ENCODE measurements at regions of chr6 and their contacts with region 1.

Region 1: DNA sequence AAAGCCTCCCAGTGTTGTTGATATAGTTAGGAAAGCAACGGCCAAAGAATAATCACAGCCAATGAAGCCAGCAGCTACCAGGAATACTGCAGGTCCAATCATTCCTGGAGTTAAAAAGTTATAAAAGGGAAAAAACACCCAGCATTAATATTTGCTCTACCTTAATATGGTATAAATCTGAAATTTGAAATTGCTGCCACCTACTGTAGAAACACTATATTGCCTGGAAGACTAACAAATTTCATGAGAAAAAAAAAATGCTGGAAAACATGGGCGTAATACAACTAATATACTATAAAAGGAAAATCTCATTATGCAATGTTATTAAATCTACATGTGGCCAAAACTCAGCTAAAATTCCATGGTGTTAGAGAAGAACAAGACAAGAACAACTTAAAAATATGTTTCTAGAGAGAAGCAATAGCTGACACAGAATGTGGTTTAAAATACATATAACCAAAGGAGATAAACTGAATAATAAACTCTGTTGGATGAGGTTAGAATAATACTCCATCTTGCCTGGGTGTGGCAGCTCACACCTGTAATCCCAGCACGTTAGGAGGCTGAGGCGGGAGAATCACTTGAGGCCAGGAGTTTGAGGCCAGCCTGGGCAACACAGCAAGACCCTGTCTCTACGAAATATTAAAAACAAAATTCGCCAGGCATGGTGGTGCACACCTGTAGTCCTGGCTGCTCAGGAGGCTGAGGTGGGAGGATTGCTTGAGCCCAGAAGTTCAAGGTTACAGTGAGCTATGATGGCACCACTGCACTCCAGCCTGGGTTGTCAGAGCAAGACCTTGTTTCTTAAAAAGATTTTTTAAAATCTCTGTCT is 43.1 kb downstream of the SLC17A5 start:
- DNase-seq: no peak
- ATAC-seq: peak in 2 of 4 donors; percentile 53 to 56
- H3K4me3 ChIP-seq: no peak overlapping the region
- H3K27ac ChIP-seq: no peak overlapping the region
- H3K4me1 ChIP-seq: peaks cover 0 to 5% (median 0%) of the 10 kb centered on the region in 12 donors
- H3K27me3 ChIP-seq: no peaks in the 10 kb centered on the region
- CTCF ChIP-seq: peak; percentile 52 to 83 (median 72)
- POLR2A ChIP-seq: no peak

Region 2: DNA sequence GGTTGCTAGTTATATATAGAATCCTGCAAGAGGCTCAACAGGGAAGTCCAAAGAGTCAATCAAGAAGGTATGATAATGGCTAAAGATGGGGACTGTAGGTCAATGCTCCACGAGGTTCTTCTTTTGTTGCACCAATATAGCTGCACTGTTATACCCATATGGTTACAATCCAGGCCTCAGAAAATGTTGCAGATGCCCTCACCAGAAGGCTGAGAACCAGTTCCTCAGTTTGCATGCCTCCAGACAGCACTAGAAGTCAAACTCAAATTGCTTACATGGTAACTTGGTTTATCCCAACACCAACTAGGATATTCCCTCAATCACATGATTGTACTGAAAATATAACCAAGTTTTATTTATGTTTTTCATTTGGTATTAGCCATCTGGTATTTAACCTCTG is 101.9 kb before region 1 on chr6:
- intact Hi-C with region 1: loop called in 2 of 10 experiments (anchors 2 to 5 kb)
- DNase-seq: no peak
- ATAC-seq: no peak
- H3K4me3 ChIP-seq: no peak overlapping the region
- H3K27ac ChIP-seq: peak overlapping the region in 1 of 12 donors; percentile 23
- H3K4me1 ChIP-seq: peaks cover 0 to 5% (median 0%) of the 10 kb centered on the region in 12 donors
- H3K27me3 ChIP-seq: no peaks in the 10 kb centered on the region
- CTCF ChIP-seq: no peak
- POLR2A ChIP-seq: no peak

Region 3: GRCh38 chr6:73515204-73515655 is 95.4 kb before region 1 on chr6:
- intact Hi-C with region 1: loop called (anchors 1 to 5 kb)
- DNase-seq: no peak
- ATAC-seq: no peak
- H3K4me3 ChIP-seq: no peak overlapping the region
- H3K27ac ChIP-seq: peak overlapping the region in 1 of 12 donors; percentile 25
- H3K4me1 ChIP-seq: peaks cover 0 to 48% (median 30%) of the 10 kb centered on the region in 12 donors
- H3K27me3 ChIP-seq: no peaks in the 10 kb centered on the region
- CTCF ChIP-seq: no peak
- POLR2A ChIP-seq: no peak

Region 4: DNA sequence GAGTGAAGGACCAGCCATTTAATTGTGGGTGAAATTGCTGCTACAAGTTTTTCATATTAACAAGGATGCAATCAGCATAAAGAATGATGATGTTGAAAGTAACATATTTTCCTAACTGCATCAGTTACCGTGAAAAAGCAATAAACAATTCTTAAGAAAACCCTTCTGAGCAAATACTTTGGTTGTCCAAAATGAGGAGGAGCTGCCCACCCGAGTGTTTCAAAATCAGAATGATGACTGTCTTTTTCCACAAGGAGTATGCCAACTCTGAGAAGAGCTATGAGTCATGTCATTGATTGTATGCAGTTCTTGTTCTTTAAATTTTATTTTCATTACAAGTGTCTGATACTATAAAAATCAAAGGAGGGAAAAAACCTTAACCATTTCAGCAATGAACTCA is 1124.6 kb after region 1 on chr6:
- intact Hi-C with region 1: no loop called
- DNase-seq: no peak
- ATAC-seq: peak in 1 of 4 donors; percentile 54
- H3K4me3 ChIP-seq: no peak overlapping the region
- H3K27ac ChIP-seq: peak overlapping the region in 6 of 12 donors; percentile 8 to 69 (median 42)
- H3K4me1 ChIP-seq: peaks cover 0 to 6% (median 0%) of the 10 kb centered on the region in 12 donors
- H3K27me3 ChIP-seq: no peaks in the 10 kb centered on the region
- CTCF ChIP-seq: no peak
- POLR2A ChIP-seq: no peak

Measured in heart left ventricle (tissue), 16 donors.